ENCODE measurements at regions of chr2 and their contacts with region 1.

Region 1: GRCh38 chr2:149611099-149611820 is 23.7 kb upstream of the MMADHC start:
- DNase-seq: no peak
- H3K4me3 ChIP-seq: no peak overlapping the region
- H3K4me3 Mint-ChIP-seq: no peak overlapping the region
- H3K27ac Mint-ChIP-seq: peak overlapping the region; percentile 54
- H3K4me1 ChIP-seq: peaks cover 20% of the 10 kb centered on the region
- H3K4me1 Mint-ChIP-seq: peaks cover 24% of the 10 kb centered on the region
- H3K27me3 ChIP-seq: no peaks in the 10 kb centered on the region
- H3K27me3 Mint-ChIP-seq: no peaks in the 10 kb centered on the region
- CTCF ChIP-seq: peak in 1 of 2 experiments; percentile 5

Region 2: DNA sequence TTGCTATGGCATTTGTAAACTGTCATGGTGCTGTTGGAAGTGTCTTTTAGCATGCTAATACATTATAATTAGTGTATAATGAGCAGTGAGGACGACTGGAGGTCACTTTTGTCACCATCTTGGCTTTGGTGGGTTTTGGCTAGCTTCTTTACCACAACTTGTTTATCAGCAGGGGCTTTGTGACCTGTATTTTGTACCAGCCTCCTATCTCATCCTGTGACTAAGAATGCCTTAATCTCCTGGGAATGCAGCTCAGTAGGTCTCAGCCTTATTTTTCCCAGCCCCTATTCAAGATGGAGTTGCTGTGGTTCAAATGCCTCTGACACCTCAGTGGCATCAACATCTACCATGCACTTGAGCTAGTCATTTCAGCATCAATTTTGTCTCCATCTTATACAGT is 251.2 kb before region 1 on chr2:
- CTCF ChIA-PET with region 1: no interaction called
- POLR2A ChIA-PET with region 1: no interaction called
- intact Hi-C with region 1: no loop called
- DNase-seq: no peak
- H3K4me3 ChIP-seq: no peak overlapping the region
- H3K4me3 Mint-ChIP-seq: no peak overlapping the region
- H3K27ac Mint-ChIP-seq: no peak overlapping the region
- H3K4me1 ChIP-seq: peaks cover 8% of the 10 kb centered on the region
- H3K4me1 Mint-ChIP-seq: peaks cover 6% of the 10 kb centered on the region
- H3K27me3 ChIP-seq: no peaks in the 10 kb centered on the region
- H3K27me3 Mint-ChIP-seq: no peaks in the 10 kb centered on the region
- CTCF ChIP-seq: no peak

Region 3: GRCh38 chr2:149650006-149650405 is 38.7 kb after region 1 on chr2:
- CTCF ChIA-PET with region 1: no interaction called
- POLR2A ChIA-PET with region 1: no interaction called
- intact Hi-C with region 1: loop called (anchors 5 kb)
- DNase-seq: no peak
- H3K4me3 ChIP-seq: no peak overlapping the region
- H3K4me3 Mint-ChIP-seq: no peak overlapping the region
- H3K27ac Mint-ChIP-seq: no peak overlapping the region
- H3K4me1 ChIP-seq: peaks cover 50% of the 10 kb centered on the region
- H3K4me1 Mint-ChIP-seq: peaks cover 48% of the 10 kb centered on the region
- H3K27me3 ChIP-seq: no peaks in the 10 kb centered on the region
- H3K27me3 Mint-ChIP-seq: no peaks in the 10 kb centered on the region
- CTCF ChIP-seq: no peak

Region 4: DNA sequence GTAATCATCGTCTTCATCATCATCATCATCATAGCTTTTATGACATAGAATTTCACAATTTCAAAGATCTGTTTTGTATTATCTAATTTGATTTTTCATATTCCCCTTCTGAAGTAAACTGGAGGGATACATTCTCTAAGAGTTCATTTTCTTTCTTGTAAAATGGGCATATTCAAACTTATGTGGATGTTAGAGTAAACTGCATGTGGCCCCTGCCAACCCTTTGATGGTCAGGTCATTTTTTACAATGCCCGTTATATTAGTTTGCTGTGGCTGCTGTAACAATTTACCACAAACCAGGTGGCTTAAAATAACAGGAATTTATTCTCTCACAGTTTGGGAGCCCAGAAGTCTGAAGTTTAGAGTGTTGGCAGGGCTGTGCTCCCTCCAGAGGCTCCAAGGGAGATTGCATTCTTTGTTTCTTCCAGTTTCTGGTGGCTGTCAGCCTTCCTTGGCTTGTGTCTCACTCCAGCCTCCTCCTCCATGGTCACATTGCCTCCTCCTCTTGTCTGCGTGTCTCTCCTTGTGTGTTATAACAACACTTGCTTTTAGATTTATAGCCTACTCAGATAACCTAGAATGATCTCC is 103.8 kb after region 1 on chr2:
- CTCF ChIA-PET with region 1: no interaction called
- POLR2A ChIA-PET with region 1: no interaction called
- intact Hi-C with region 1: loop called (anchors 5 kb)
- DNase-seq: peak; percentile 40 to 47
- H3K4me3 ChIP-seq: no peak overlapping the region
- H3K4me3 Mint-ChIP-seq: no peak overlapping the region
- H3K27ac Mint-ChIP-seq: no peak overlapping the region
- H3K4me1 ChIP-seq: no peaks in the 10 kb centered on the region
- H3K4me1 Mint-ChIP-seq: no peaks in the 10 kb centered on the region
- H3K27me3 ChIP-seq: no peaks in the 10 kb centered on the region
- H3K27me3 Mint-ChIP-seq: no peaks in the 10 kb centered on the region
- CTCF ChIP-seq: peak; percentile 75 to 81

Measured in Caco-2 (cell line).